Ascending aorta (tissue), 2 donors: ENCODE measurements at regions of chr2 and their contacts with region 1.

Region 1: DNA sequence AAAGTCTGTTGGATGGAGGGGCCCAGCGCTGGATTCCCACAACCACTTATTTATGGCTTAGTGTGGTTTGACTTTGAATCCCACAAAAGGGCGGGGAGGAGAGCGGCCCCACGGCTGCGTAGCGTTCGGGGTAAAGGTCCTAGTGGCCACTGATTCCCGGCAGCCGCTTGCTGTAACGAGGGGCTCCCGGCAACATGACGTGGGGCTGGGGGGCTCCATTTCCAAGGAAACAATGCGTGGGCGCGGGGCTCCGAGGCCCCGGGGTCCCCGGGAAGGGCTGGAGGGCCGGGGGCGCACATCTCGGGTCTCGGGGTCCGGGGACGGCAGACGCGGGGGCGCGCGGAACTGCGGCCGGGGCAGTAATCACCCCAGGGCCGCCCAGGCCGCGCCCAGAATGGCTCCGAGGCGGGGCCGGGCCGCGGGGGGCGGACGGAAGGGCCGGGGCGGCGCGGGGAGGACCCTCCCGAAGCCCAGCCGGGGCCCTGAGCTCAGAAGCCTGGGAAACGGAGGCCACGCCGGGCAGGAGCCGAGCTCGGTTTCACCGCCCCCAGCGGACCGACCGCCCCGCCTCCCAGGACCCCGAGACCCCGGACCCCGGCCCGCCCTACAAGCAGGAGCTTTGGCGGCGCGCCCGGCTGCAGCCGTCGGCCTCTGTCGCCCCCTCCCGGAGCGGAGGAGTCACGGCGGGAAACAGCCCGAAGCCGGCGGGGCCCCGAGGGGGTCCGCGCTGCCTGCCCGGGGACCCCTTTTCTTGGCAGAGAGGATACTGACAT is 11.9 kb upstream of the MLPH start:
- DNase-seq: peak in 1 of 2 donors; percentile 86
- H3K4me3 ChIP-seq: peak overlapping the region; percentile 68 to 76
- H3K27ac ChIP-seq: peak overlapping the region; percentile 83 to 91
- H3K4me1 ChIP-seq: peaks cover 3 to 17% of the 10 kb centered on the region in 2 donors
- H3K27me3 ChIP-seq: no peaks in the 10 kb centered on the region
- CTCF ChIP-seq: peak; percentile 96 to 99 (median 96)

Region 2: DNA sequence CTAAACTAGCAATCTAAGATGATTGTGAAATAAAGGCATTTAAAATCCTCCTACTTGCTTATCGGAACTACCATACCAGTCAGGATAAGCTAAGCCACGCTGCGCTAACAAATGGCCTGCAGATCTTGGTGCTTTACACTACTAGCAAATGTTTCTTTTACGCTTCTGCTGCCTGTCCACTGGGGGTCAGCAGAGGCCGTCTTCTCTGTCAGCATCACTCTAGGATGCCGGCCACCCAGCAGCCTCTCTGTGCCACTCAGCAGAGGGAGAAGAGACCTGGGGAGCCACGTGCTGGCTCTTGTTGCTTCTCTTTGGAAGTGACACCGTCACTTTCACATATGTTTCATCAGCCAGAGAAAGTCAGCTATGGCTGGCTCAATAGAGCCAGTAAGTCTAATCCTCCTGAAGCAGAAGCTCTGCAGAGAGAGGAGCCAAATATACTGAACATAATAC is 352.9 kb before region 1 on chr2:
- intact Hi-C with region 1: loop called (anchors 1 kb)
- DNase-seq: peak in 1 of 2 donors; percentile 76
- H3K4me3 ChIP-seq: no peak overlapping the region
- H3K27ac ChIP-seq: no peak overlapping the region
- H3K4me1 ChIP-seq: no peaks in the 10 kb centered on the region
- H3K27me3 ChIP-seq: no peaks in the 10 kb centered on the region
- CTCF ChIP-seq: peak; percentile 68 to 71 (median 69)

Region 3: DNA sequence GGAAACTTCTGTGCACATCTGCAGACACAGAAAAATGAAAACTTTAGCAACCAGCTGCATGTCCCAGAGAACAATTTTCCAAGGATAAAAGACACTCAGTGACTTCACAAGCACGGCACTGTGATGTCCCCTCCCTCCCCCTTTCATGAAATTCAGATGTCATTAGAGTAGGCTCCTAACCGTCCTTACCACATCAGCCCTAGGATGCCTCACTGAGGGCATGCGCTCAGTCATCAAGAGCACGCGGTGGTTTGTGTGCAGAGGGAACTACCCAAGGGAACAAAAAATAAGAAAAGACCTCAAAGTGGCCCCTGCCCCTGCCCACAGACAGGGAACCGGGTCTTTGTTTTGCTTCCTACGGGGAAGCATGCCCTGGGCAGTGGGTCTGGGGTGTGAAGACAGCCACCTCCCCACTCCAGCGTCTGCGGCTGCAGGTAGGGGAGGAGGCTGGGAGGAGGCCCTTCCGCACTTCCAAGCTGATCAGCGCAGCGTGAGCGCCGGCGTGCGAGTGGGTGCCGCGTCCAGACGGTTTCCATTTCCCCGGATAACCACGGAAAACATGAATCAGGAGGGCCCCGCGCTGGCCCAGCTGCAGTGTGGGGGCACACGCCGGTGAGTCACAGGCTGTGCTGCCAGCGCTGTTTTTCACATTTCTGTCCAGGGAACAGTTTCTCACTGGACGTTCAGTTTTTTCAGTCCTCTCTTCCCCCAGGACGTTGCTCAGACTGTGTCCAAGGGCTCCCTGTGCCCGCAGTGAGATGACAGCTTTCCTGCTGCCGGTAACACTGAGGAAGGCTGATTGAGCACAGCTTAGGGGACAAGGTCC is 318.9 kb before region 1 on chr2:
- intact Hi-C with region 1: loop called (anchors 5 kb)
- DNase-seq: peak; percentile 38 to 87
- H3K4me3 ChIP-seq: peak overlapping the region; percentile 23 to 44
- H3K27ac ChIP-seq: peak overlapping the region; percentile 54 to 74
- H3K4me1 ChIP-seq: peaks cover 5 to 14% of the 10 kb centered on the region in 2 donors
- H3K27me3 ChIP-seq: no peaks in the 10 kb centered on the region
- CTCF ChIP-seq: no peak

Region 4: GRCh38 chr2:237171396-237171795 is 303.7 kb before region 1 on chr2:
- intact Hi-C with region 1: loop called (anchors 1 kb)
- DNase-seq: no peak
- H3K4me3 ChIP-seq: peak overlapping the region in 1 of 2 donors; percentile 31
- H3K27ac ChIP-seq: peak overlapping the region; percentile 32 to 67
- H3K4me1 ChIP-seq: peaks cover 0 to 6% of the 10 kb centered on the region in 2 donors
- H3K27me3 ChIP-seq: no peaks in the 10 kb centered on the region
- CTCF ChIP-seq: peak in 2 of 3 experiments; percentile 39 to 44

Region 5: DNA sequence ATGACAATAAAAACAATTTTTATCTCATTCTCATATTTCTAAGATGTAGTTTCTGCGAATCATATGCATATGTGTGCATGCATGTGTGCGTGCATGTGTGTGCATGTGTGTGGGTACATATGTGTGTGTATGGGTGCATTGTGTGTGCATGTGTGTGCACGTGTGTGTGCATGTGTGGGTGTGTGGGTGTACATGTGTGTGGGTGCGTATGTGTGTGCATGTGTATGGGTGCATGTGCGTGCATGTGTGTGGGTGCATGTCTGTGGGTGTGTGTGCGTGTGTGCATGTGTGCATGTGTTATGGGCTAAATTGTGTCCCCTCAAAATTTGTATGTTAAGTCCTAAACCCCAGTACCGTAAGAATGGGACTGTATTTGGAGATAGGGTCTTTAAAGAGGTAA is 110.5 kb before region 1 on chr2:
- intact Hi-C with region 1: loop called (anchors 5 kb)
- DNase-seq: no peak
- H3K4me3 ChIP-seq: no peak overlapping the region
- H3K27ac ChIP-seq: no peak overlapping the region
- H3K4me1 ChIP-seq: no peaks in the 10 kb centered on the region
- H3K27me3 ChIP-seq: no peaks in the 10 kb centered on the region
- CTCF ChIP-seq: no peak

Region 6: DNA sequence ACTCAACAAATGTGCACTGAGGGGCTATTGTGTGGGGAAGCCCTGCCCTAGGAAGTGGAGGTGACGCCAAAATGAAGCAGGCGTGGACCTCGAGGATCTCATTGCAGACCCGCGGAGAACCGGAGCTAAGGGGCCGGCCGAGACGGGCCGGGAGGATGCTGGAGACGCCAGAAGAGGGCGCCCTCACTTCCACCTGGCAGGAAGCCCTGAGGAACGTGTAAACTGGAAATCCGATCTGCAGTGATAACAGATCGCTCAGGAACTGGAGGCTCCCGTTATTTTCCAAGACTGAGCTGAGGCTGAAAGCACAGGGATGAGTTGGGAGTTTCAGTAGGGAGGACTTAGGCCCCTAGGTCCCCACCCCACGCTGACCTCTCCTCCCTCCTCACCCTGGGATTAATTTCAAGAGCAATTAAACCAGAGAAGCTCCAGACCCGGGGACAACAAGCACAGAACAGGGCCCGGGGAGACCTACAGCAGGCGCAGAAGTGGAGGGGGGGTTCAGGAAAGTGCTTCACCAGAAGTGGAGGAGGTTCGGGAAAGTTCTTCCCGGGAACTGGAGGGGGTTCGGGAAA is 53.5 kb before region 1 on chr2:
- intact Hi-C with region 1: loop called (anchors 1 kb)
- DNase-seq: peak in 1 of 2 donors; percentile 89
- H3K4me3 ChIP-seq: peak overlapping the region; percentile 7 to 57
- H3K27ac ChIP-seq: peak overlapping the region; percentile 27 to 55
- H3K4me1 ChIP-seq: peaks cover 0 to 5% of the 10 kb centered on the region in 2 donors
- H3K27me3 ChIP-seq: no peaks in the 10 kb centered on the region
- CTCF ChIP-seq: peak; percentile 81 to 89 (median 83)

Region 7: GRCh38 chr2:237540823-237541222 is 65.7 kb after region 1 on chr2:
- intact Hi-C with region 1: no loop called
- DNase-seq: no peak
- H3K4me3 ChIP-seq: no peak overlapping the region
- H3K27ac ChIP-seq: no peak overlapping the region
- H3K4me1 ChIP-seq: no peaks in the 10 kb centered on the region
- H3K27me3 ChIP-seq: no peaks in the 10 kb centered on the region
- CTCF ChIP-seq: no peak

Region 8: DNA sequence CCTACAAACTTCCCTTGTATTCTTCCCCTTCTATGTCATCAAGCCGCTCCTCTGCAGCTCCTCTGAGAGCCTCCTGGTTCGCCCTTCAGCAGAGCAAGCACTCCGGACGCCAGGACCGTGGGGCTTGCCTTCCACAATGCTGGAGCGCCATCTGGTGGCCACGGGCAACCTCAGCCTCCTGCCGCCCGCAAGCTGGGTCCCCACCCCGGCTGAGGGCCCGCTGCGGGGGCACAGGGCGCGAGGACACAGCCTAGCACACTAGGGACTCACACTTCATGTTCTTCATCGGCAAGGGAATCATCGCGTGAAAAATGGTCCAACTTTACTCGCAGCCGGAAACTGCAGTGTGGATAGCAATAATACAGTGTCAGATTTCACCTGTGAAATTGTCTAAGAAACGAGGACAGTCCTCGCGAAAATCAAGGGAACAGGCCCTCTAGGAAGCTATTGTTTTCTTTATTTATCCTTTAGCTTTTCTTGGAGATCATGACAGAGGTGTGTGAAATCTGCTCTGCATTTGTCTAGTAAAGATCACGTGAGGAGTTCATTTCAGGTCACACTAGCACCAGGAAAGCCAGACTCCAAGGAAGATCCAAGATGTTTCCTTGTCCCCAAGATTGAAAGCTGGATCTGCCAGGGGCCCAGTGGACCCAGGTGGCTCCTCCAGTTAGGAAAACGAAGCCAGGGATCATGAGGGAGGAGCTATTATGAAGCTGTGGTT is 97.1 kb after region 1 on chr2:
- intact Hi-C with region 1: loop called (anchors 1 kb)
- DNase-seq: peak in 1 of 2 donors; percentile 93
- H3K4me3 ChIP-seq: no peak overlapping the region
- H3K27ac ChIP-seq: no peak overlapping the region
- H3K4me1 ChIP-seq: peaks cover 0 to 5% of the 10 kb centered on the region in 2 donors
- H3K27me3 ChIP-seq: no peaks in the 10 kb centered on the region
- CTCF ChIP-seq: peak; percentile 97 to 99 (median 98)